ENCODE measurements at regions of chr10 and their contacts with region 1.

Region 1: DNA sequence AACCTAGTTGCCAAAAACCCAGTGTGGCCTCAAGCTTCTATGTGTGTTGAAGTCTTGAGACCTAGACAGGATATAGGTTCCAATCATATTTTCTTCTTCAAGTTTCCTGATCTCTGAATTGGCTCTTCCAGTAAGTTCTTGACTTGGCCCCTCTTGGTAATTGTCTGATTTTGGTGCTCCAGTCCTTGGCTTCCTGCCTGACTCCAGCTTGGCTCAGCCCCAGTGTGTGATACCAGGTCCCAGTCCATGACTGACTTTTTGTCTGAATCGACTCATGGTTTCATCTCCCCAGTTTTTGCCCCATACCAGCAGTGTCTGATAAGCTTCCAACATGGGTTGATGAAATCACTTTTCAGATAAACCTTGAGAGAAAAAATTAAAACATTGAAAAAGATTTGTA is 72.3 kb downstream of the FAS start:
- H3K4me3 ChIP-seq: no peak overlapping the region
- H3K27ac ChIP-seq: no peak overlapping the region
- H3K4me1 ChIP-seq: no peaks in the 10 kb centered on the region
- CTCF ChIP-seq: no peak

Region 2: DNA sequence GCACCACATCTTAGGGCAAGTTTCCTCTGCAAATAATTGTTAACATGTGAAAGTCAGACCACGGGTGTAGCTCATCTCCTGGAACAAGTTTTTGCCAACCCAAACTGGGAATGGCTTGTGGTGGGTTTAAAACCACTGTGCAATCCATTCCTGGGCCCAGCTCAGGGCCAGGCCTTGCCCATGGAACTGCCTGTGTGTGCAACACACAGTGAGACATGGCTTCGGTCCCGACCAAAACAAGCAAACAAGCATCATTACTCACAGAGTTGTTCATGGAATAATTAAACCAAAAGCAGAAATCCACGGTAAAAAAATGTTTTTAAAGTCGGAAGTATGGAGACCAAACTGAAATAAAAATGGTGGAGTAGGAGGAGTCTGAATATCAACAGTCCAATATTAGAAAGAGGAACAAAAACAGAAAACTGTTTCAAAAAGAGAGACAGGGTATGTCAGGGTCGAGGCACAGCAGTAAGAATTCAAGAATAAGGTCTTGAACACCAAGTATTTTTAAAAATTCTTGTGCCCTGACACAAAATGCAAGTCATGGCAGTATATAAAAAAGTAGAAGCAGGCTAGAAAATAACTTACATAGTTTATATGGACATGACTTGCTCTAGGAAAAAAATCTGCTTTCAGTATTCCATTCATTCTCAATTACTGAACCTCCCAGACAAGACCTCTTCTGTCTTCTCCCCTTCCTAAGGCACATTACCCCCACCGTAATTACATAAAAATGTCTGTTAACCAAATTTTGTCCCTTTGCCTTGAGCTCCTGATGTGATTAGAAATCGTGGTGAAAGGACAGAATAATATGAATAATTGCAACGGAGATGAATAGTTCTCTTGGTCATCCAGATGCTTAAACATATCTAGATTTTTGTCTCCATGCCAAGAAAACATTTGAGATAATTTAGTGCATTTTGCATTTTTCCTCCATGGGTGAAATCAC is 16.1 kb after region 1 on chr10:
- CTCF ChIA-PET with region 1: interaction called, 10 read pairs
- POLR2A ChIA-PET with region 1: no interaction called
- H3K4me3 ChIP-seq: no peak overlapping the region
- H3K27ac ChIP-seq: no peak overlapping the region
- H3K4me1 ChIP-seq: no peaks in the 10 kb centered on the region
- CTCF ChIP-seq: no peak

Measured in HEK293 (cell line).